ENCODE measurements at regions of chr18 and their contacts with region 1.

Region 1: GRCh38 chr18:59459369-59460079 is 100.5 kb upstream of the LMAN1 start:
- DNase-seq: peak; percentile 40
- CTCF ChIP-seq: peak; percentile 54

Region 2: GRCh38 chr18:59426855-59427254 is 32.7 kb before region 1 on chr18:
- CTCF ChIA-PET with region 1: interaction called, 13 read pairs
- POLR2A ChIA-PET with region 1: no interaction called
- DNase-seq: no peak
- CTCF ChIP-seq: no peak

Region 3: DNA sequence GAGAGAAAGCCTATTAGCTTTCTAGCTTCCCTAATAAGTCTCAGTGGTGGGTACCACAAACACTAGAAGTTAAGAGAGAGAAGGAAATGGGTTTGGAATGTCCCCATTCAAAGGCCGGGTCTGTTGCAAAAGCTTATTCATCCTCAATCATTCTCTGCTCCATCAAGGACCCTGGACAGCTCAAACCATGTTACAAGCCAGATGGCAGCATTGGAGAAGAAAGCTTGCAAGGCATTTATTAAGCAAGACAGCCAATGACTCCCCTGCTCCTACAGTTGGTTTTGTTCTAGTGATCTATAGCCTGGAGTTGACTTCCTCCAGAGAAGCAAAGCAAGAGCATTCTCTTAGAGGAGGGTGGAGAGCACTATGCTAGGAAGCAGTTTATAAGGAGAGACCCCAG is 13.5 kb before region 1 on chr18:
- CTCF ChIA-PET with region 1: interaction called, 25 read pairs
- POLR2A ChIA-PET with region 1: no interaction called
- DNase-seq: no peak
- CTCF ChIP-seq: no peak

Region 4: GRCh38 chr18:59470561-59471121 is 11.1 kb after region 1 on chr18:
- CTCF ChIA-PET with region 1: interaction called, 14 read pairs
- POLR2A ChIA-PET with region 1: no interaction called
- DNase-seq: no peak
- CTCF ChIP-seq: no peak